HEK293 (cell line): ENCODE measurements at regions of chr6 and their contacts with region 1.

Region 1: DNA sequence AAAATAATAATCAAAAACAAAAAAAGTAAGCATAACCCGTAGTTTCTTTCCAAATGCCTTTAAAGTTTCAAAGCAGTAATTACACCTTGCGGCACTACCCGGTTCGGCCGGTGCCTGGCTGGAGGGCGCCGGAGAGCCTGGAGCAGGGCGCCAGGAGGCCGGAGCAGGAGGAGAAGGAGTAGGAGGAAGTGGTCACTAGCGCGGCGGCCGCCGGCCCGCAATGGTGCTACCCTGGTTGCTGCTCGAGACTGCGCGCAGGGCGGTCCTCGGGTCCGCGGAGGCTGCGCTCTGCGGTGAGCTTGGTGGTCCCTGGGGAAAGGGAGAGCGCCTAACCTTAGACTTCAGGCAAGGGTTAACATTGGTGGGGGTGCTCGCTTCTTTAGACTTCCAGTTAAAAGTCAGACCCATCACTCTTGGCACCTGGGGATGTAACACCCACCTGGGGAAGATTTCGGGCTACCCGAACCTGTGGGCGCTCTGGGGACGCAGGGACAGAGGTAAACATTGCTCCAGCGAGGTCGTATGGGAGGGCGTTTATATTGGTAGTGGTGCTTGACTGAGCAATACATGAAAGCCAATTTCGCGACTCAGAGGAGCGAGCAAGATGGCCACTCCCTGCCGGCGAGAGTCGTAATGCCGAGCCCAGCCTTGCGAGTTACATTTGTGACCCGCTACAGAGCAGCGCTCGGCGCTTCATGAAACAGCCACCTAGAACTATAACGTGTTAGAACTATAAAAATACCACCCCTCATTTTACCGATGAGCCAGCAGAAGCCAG is 5.8 kb upstream of the USP45 start:
- H3K4me3 ChIP-seq: peak overlapping the region; percentile 76
- H3K27ac ChIP-seq: peak overlapping the region; percentile 85
- H3K4me1 ChIP-seq: peaks cover 4% of the 10 kb centered on the region; the same call in 1 of the 2 replicates
- CTCF ChIP-seq: peak; percentile 69

Region 2: DNA sequence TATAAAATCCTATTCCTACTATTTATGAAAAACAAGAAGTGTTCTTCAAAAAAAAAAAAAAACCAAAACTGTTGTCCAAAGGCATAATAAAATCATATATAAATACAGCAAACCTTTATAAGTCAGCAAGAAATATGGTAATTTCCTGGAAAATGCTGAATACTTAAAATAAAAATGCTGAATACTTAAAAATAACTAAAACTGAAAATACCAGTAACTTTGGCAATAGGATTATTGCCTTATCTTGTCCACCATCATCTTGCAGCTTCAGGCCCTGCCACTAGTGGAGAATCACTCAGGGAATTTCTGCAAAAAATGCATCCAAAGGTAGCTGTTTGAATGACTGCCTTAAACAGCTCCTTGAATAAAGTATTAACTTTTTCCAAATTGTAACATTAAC is 22.9 kb after region 1 on chr6:
- CTCF ChIA-PET with region 1: interaction called, 11 read pairs
- POLR2A ChIA-PET with region 1: interaction called, 3 read pairs
- H3K4me3 ChIP-seq: no peak overlapping the region
- H3K27ac ChIP-seq: no peak overlapping the region
- H3K4me1 ChIP-seq: no peaks in the 10 kb centered on the region
- CTCF ChIP-seq: no peak

Region 3: GRCh38 chr6:100304575-100304974 is 783.5 kb after region 1 on chr6:
- CTCF ChIA-PET with region 1: no interaction called
- POLR2A ChIA-PET with region 1: no interaction called
- H3K4me3 ChIP-seq: no peak overlapping the region
- H3K27ac ChIP-seq: no peak overlapping the region
- H3K4me1 ChIP-seq: peaks cover 7% of the 10 kb centered on the region; the same call in 1 of the 2 replicates
- CTCF ChIP-seq: no peak